ENCODE measurements at regions of chr3 and their contacts with region 1.

Region 1: GRCh38 chr3:122572940-122573412 is 4.5 kb upstream of the PARP15 start:
- DNase-seq: peak; percentile 75
- H3K4me3 Mint-ChIP-seq: no peak overlapping the region
- H3K27ac Mint-ChIP-seq: peak overlapping the region; percentile 73
- H3K4me1 Mint-ChIP-seq: peaks cover 69% of the 10 kb centered on the region
- H3K27me3 Mint-ChIP-seq: no peaks in the 10 kb centered on the region

Region 2: GRCh38 chr3:122146466-122146865 is 426.5 kb before region 1 on chr3:
- CTCF ChIA-PET with region 1: no interaction called
- intact Hi-C with region 1: loop called (anchors 1 kb)
- DNase-seq: peak; percentile 86
- H3K4me3 Mint-ChIP-seq: no peak overlapping the region
- H3K27ac Mint-ChIP-seq: peak overlapping the region; percentile 46
- H3K4me1 Mint-ChIP-seq: peaks cover 28% of the 10 kb centered on the region
- H3K27me3 Mint-ChIP-seq: peaks cover 1% of the 10 kb centered on the region

Region 3: GRCh38 chr3:122508135-122508914 is 64.7 kb before region 1 on chr3:
- CTCF ChIA-PET with region 1: no interaction called
- intact Hi-C with region 1: loop called (anchors 2 kb)
- DNase-seq: peak; percentile 12
- H3K4me3 Mint-ChIP-seq: no peak overlapping the region
- H3K27ac Mint-ChIP-seq: peak overlapping the region; percentile 47
- H3K4me1 Mint-ChIP-seq: peaks cover 78% of the 10 kb centered on the region
- H3K27me3 Mint-ChIP-seq: no peaks in the 10 kb centered on the region

Region 4: DNA sequence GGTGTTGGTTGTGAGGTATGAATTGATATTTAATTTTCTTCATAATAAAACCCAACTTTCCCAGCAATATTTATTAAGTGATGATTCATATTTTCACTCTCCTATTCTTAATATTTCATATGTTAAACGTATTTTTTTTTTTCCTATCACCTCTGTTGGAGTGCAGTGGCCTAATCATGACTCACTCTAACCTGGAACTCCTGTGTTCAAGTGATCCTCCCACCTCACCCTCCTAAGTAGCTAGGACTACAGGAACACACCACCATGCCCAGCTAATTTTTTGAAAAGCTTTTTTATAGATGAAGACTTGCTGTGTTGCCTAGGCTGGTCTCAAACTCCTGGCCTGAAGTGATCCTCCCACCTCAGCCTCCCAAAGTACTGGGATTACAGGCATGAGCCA is 13.1 kb after region 1 on chr3:
- CTCF ChIA-PET with region 1: interaction called, 4 read pairs
- intact Hi-C with region 1: loop called (anchors 1 kb)
- DNase-seq: no peak
- H3K4me3 Mint-ChIP-seq: no peak overlapping the region
- H3K27ac Mint-ChIP-seq: no peak overlapping the region
- H3K4me1 Mint-ChIP-seq: peaks cover 45% of the 10 kb centered on the region
- H3K27me3 Mint-ChIP-seq: no peaks in the 10 kb centered on the region

Region 5: DNA sequence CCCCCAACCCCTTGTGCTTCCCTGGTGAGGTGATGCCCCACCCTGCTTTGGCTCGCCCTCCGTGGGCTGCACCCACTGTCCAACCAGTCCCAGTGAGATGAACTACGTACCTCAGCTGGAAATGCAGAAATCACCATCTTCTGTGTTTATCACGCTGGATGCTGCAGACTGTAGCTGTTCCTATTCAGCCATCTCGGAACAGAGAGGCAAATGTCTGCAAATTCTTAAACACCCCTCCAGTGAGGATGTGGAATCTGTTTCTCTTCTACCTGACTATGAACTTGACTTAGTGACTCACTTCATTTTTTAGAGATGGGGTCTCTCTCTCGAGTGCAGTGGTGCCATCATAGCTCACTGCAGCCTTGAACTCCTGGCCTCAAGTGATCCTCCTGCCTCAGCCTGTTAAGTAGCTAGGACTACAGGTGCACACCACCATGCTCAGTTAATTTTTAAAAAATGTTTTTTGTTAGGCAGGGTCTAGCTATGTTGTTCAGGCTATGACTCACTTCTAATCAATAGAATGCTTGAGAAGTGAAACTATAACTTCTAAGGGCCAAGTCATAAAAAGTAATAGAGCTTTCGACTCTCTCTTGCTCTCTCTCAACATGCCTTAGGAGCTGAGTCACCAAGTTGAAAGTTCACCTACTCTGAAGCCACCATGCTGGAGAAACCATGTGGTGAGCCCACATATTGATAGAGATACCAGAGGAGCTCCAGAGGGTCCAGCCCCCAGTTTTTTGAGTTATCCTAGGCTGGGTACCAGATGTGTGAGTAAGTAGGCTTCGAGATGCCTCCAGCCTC is 96.2 kb after region 1 on chr3:
- CTCF ChIA-PET with region 1: interaction called, 3 read pairs
- intact Hi-C with region 1: loop called (anchors 1 kb)
- DNase-seq: peak; percentile 56
- H3K4me3 Mint-ChIP-seq: no peak overlapping the region
- H3K27ac Mint-ChIP-seq: no peak overlapping the region
- H3K4me1 Mint-ChIP-seq: peaks cover 15% of the 10 kb centered on the region
- H3K27me3 Mint-ChIP-seq: peaks cover 3% of the 10 kb centered on the region

Region 6: GRCh38 chr3:123584988-123585937 is 1012.3 kb after region 1 on chr3 and contains the start of gene HACD2:
- CTCF ChIA-PET with region 1: no interaction called
- intact Hi-C with region 1: loop called (anchors 10 kb)
- DNase-seq: peak; percentile 96
- H3K4me3 Mint-ChIP-seq: no peak within 1 kb of the TSS
- H3K27ac Mint-ChIP-seq: peak within 1 kb of the TSS; percentile 57
- H3K4me1 Mint-ChIP-seq: peaks cover 22% of the 10 kb centered on the region
- H3K27me3 Mint-ChIP-seq: no peaks in the 10 kb centered on the region
- total RNA-seq, gene HACD2: 25.9 TPM